Dendritic cell treated with granulocyte-macrophage colony-stimulating factor and Interleukin-4, amounts not matched to agents 40 ng/mL and 50 ng/mL, for 4 days (primary cell): ENCODE measurements at regions of chr7 and their contacts with region 1.

Region 1: GRCh38 chr7:141014524-141015395 is at the start of gene MRPS33:
- H3K4me3 Mint-ChIP-seq: peak within 1 kb of the TSS; percentile 84
- H3K27ac Mint-ChIP-seq: peak within 1 kb of the TSS; percentile 90
- H3K4me1 Mint-ChIP-seq: peaks cover 16% of the 10 kb centered on the region
- H3K27me3 Mint-ChIP-seq: peaks cover 22% of the 10 kb centered on the region

Region 2: DNA sequence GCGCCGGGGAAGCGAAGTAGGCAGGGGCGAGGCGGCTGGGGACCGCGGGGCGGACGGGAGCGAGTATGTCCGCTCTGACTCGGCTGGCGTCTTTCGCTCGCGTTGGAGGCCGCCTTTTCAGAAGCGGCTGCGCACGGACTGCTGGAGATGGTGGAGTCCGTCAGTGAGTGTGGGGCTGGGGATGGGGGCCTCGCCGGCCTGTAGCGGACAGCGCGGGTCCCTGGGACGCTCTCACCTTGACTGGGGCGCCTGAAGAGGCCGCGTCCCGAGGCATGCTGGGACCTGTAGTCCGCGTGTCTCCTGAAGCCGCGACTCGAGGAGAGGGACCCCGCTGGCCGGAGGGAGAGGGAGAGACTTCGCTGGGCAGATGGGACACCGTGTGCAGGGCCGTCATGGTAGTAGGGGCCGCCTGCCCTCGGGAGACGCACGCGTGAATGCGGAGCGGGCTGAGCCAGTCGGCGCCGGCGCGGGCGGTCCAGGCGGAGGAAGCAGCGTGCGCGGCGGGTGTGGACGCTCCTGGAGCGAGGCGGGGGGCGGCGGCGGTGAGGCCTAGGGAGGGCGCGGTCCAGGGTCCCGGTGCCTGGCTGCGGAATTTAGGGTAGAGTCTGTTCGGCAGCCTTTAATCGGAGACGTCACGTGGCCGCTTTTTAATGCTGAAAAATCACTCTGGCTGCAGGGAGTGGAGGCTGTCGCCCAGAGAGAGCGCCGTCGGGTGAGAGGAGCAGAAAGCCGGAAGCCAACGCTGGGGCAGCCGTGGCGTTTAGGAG is 317.9 kb before region 1 on chr7 and contains the start of gene NDUFB2:
- intact Hi-C with region 1: loop called (anchors 10 kb)
- H3K4me3 Mint-ChIP-seq: peak within 1 kb of the TSS; percentile 94
- H3K27ac Mint-ChIP-seq: peak within 1 kb of the TSS; percentile 98
- H3K4me1 Mint-ChIP-seq: peaks cover 35% of the 10 kb centered on the region
- H3K27me3 Mint-ChIP-seq: no peaks in the 10 kb centered on the region

Region 3: GRCh38 chr7:140810830-140811556 is 203.8 kb before region 1 on chr7:
- intact Hi-C with region 1: loop called (anchors 2 kb)
- H3K4me3 Mint-ChIP-seq: no peak overlapping the region
- H3K27ac Mint-ChIP-seq: no peak overlapping the region
- H3K4me1 Mint-ChIP-seq: peaks cover 5% of the 10 kb centered on the region
- H3K27me3 Mint-ChIP-seq: no peaks in the 10 kb centered on the region

Region 4: DNA sequence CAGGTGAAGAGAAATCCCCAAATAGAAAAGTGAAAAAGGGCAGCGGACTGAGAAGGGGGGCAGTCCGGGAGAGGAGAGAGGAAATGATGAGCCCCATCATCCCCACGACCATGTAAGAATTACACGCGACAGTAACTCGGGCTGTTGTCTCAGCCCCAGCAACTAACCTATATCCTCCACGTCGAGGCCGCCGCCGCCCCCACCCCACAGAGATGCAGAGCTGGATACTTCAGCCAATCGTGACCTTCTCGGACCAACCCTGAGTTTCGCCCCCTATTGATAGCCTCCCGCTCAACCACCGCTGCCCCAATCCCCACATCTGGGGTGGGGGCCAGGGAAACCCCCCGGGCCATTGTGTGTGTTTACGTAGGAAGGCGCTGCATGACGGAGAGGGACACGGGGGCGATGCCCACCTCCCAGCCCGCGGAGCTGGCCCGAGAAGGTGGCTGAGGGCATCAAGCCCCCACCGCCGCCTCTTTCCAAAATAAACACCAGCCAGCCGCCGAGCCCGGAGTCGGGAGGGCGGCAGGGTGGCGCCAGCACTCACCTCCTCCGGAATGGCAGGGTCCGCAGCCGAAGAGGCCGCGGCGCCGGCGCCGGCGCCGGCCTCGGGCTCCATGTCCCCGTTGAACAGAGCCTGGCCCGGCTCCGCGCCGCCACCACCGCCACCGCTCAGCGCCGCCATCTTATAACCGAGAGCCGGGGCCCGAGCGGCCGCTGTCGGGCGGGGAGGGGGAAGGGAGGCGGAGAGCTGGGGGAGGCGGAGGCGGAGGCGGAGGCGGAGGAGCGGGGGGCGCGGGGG is 90.5 kb before region 1 on chr7:
- intact Hi-C with region 1: loop called (anchors 1 kb)
- H3K4me3 Mint-ChIP-seq: no peak overlapping the region
- H3K27ac Mint-ChIP-seq: no peak overlapping the region
- H3K4me1 Mint-ChIP-seq: peaks cover 9% of the 10 kb centered on the region
- H3K27me3 Mint-ChIP-seq: peaks cover 2% of the 10 kb centered on the region